CD4-positive, alpha-beta memory T cell (primary cell): ENCODE measurements at regions of chr21 and their contacts with region 1.

Region 1: DNA sequence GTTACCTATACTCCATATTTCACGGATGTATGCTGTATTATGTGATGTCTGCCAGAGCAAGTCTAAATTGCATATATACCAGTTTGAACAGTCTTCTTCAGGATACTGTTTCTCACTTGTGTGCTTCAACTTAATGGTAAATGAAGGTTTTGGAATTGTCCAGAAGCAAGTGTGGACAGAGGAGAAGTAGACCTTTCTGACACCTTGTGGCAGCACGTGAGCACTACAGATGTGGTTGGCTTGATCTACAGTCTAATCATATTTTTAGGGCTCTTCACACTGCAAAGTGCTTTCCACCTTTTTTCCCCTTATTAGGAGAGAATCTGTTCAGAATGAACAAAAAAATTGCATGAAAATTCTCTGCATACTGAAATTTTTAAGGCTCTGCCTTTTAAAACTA is 10.9 kb downstream of the MORC3 start:
- DNase-seq: peak; percentile 43 to 61 (median 53)
- H3K4me3 ChIP-seq: no peak overlapping the region
- H3K4me3 Mint-ChIP-seq: peak overlapping the region in 2 of 8 donors; percentile 0 to 61
- H3K27ac ChIP-seq: no peak overlapping the region
- H3K27ac Mint-ChIP-seq: peak overlapping the region in 6 of 7 donors; percentile 58 to 75 (median 70)
- H3K4me1 ChIP-seq: peaks cover 53% of the 10 kb centered on the region
- H3K4me1 Mint-ChIP-seq: peaks cover 38 to 58% (median 47%) of the 10 kb centered on the region in 4 donors
- H3K27me3 ChIP-seq: no peaks in the 10 kb centered on the region
- H3K27me3 Mint-ChIP-seq: no peaks in the 10 kb centered on the region

Region 2: GRCh38 chr21:34967509-34968289 is 1363.2 kb before region 1 on chr21:
- CTCF ChIA-PET with region 1: no interaction called
- POLR2A ChIA-PET with region 1: no interaction called
- intact Hi-C with region 1: no loop called
- DNase-seq: peak in 1 of 5 donors; percentile 70
- H3K4me3 ChIP-seq: no peak overlapping the region
- H3K4me3 Mint-ChIP-seq: peak overlapping the region in 7 of 8 donors; percentile 37 to 88 (median 71)
- H3K27ac ChIP-seq: peak overlapping the region; percentile 29
- H3K27ac Mint-ChIP-seq: peak overlapping the region; percentile 66 to 94 (median 86)
- H3K4me1 ChIP-seq: peaks cover 91% of the 10 kb centered on the region
- H3K4me1 Mint-ChIP-seq: peaks cover 74 to 98% (median 89%) of the 10 kb centered on the region in 4 donors
- H3K27me3 ChIP-seq: no peaks in the 10 kb centered on the region
- H3K27me3 Mint-ChIP-seq: no peaks in the 10 kb centered on the region

Region 3: GRCh38 chr21:36079010-36079649 is 251.8 kb before region 1 on chr21:
- CTCF ChIA-PET with region 1: no interaction called
- POLR2A ChIA-PET with region 1: no interaction called
- intact Hi-C with region 1: no loop called
- DNase-seq: peak in 4 of 5 donors; percentile 42 to 56 (median 52)
- H3K4me3 ChIP-seq: peak overlapping the region in 1 of 2 donors; percentile 50
- H3K4me3 Mint-ChIP-seq: peak overlapping the region; percentile 21 to 90 (median 82)
- H3K27ac ChIP-seq: peak overlapping the region; percentile 40
- H3K27ac Mint-ChIP-seq: peak overlapping the region; percentile 32 to 95 (median 92)
- H3K4me1 ChIP-seq: peaks cover 17% of the 10 kb centered on the region
- H3K4me1 Mint-ChIP-seq: peaks cover 11 to 28% (median 21%) of the 10 kb centered on the region in 4 donors
- H3K27me3 ChIP-seq: no peaks in the 10 kb centered on the region
- H3K27me3 Mint-ChIP-seq: no peaks in the 10 kb centered on the region

Region 4: GRCh38 chr21:36288651-36289243 is 42.2 kb before region 1 on chr21:
- CTCF ChIA-PET with region 1: interaction called, 6 read pairs
- POLR2A ChIA-PET with region 1: interaction called, 6 read pairs
- intact Hi-C with region 1: loop called (anchors 1 kb)
- DNase-seq: peak in 4 of 5 donors; percentile 59 to 72 (median 62)
- H3K4me3 ChIP-seq: peak overlapping the region in 1 of 2 donors; percentile 11
- H3K4me3 Mint-ChIP-seq: peak overlapping the region; percentile 65 to 89 (median 80)
- H3K27ac ChIP-seq: peak overlapping the region; percentile 77
- H3K27ac Mint-ChIP-seq: peak overlapping the region; percentile 95 to 99 (median 96)
- H3K4me1 ChIP-seq: peaks cover 26% of the 10 kb centered on the region
- H3K4me1 Mint-ChIP-seq: peaks cover 18 to 29% (median 24%) of the 10 kb centered on the region in 4 donors
- H3K27me3 ChIP-seq: no peaks in the 10 kb centered on the region
- H3K27me3 Mint-ChIP-seq: peaks cover 0 to 1% of the 10 kb centered on the region in 2 donors

Region 5: GRCh38 chr21:36510114-36510655 is 179.3 kb after region 1 on chr21:
- CTCF ChIA-PET with region 1: no interaction called
- POLR2A ChIA-PET with region 1: no interaction called
- intact Hi-C with region 1: no loop called
- DNase-seq: no peak
- H3K4me3 ChIP-seq: no peak overlapping the region
- H3K4me3 Mint-ChIP-seq: no peak overlapping the region
- H3K27ac ChIP-seq: no peak overlapping the region
- H3K27ac Mint-ChIP-seq: no peak overlapping the region
- H3K4me1 ChIP-seq: no peaks in the 10 kb centered on the region
- H3K4me1 Mint-ChIP-seq: peaks cover 0 to 6% (median 2%) of the 10 kb centered on the region in 4 donors
- H3K27me3 ChIP-seq: peaks cover 3% of the 10 kb centered on the region
- H3K27me3 Mint-ChIP-seq: peaks cover 8 to 19% of the 10 kb centered on the region in 2 donors